A673 (cell line): ENCODE measurements at regions of chr11 and their contacts with region 1.

Region 1: GRCh38 chr11:45423475-45424120 is 137.5 kb upstream of the SYT13 start:
- DNase-seq: no peak
- H3K4me3 ChIP-seq: no peak overlapping the region
- H3K27ac ChIP-seq: no peak overlapping the region
- H3K4me1 ChIP-seq: no peaks in the 10 kb centered on the region
- H3K27me3 ChIP-seq: no peaks in the 10 kb centered on the region
- CTCF ChIP-seq: no peak

Region 2: DNA sequence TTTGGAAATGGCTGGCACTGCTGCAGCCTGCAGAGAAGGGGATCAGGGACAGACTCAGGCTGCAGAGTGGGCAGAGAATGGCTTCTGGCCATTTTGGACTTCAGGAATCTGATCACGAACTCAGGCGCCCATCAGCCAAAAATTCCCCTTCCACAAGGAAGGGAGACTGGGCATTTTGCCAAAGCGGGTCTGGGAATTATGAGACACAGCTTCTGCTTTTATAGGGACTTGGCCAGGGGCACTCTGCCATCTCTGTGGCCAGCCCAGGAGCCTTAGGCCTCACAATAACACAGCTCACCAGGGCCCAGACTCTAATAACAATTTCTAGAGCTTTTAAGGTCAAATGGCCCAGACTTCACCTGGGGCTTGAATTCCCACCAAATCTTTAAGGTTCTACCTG is 167.1 kb after region 1 on chr11:
- CTCF ChIA-PET with region 1: no interaction called
- POLR2A ChIA-PET with region 1: no interaction called
- intact Hi-C with region 1: no loop called
- DNase-seq: no peak
- H3K4me3 ChIP-seq: no peak overlapping the region
- H3K27ac ChIP-seq: no peak overlapping the region
- H3K4me1 ChIP-seq: no peaks in the 10 kb centered on the region
- H3K27me3 ChIP-seq: peaks cover 3% of the 10 kb centered on the region
- CTCF ChIP-seq: no peak

Region 3: DNA sequence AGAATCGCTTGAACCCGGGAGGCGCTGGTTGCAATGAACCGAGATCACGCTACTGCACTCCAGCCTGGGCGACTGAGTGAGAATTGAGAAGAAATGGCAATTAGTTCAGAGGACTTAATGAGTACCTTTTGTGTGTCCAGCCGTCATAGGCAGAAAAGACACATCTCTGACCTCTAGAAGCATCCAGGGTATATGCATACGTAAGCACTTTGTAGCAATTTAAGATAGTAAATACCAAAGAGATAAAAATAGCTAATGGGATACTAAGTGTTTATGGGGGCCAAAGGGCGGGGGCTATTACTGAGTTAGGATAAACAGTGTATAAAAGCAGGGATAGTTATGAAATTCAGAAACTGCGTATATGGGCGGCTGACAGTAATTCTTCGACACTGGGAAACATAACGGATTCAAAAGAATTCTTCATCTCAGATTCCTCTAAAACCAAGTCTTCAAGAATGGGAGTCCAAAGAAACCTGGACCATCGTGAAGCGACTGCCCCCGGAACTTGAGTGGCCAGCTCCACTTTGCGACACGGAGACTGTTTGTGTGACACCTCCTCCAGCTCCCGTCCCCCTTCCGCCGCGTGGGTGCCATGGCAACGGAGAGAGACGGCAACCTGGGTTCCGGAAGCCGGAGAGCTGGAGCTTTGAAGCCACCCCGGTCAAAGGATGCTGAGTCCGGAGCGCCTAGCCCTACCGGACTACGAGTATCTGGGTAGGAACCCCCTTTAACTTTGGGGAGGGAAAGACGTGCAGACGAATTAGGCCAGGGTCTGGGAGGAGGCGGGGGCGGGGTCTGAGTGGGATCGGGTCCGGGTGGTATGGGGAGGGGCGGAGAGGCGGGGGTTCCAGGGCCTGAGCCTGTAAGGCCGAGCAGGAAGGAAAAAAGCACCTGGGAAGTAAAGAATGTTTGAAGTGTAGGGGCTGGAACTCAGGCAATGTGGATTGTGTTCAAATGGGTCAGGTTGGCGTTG is 1512.8 kb after region 1 on chr11 and contains the start of gene CSTPP1:
- CTCF ChIA-PET with region 1: no interaction called
- POLR2A ChIA-PET with region 1: no interaction called
- intact Hi-C with region 1: loop called (anchors 10 kb)
- DNase-seq: peak; percentile 100
- H3K4me3 ChIP-seq: peak within 1 kb of the TSS; percentile 64
- H3K27ac ChIP-seq: peak within 1 kb of the TSS; percentile 1
- H3K4me1 ChIP-seq: no peaks in the 10 kb centered on the region
- H3K27me3 ChIP-seq: no peaks in the 10 kb centered on the region
- CTCF ChIP-seq: no peak
- total RNA-seq, gene CSTPP1: 79.3 and 89.7 TPM in 2 replicates